HEK293 (cell line): ENCODE measurements at regions of chr11 and their contacts with region 1.

Region 1: GRCh38 chr11:125345421-125346178 is 150.5 kb downstream of the FEZ1 start:
- H3K4me3 ChIP-seq: no peak overlapping the region
- H3K27ac ChIP-seq: no peak overlapping the region
- H3K4me1 ChIP-seq: no peaks in the 10 kb centered on the region
- CTCF ChIP-seq: peak; percentile 27; the same call in 1 of the 2 replicates

Region 2: GRCh38 chr11:124778281-124778680 is 567.3 kb before region 1 on chr11:
- CTCF ChIA-PET with region 1: no interaction called
- POLR2A ChIA-PET with region 1: no interaction called
- H3K4me3 ChIP-seq: no peak overlapping the region
- H3K27ac ChIP-seq: no peak overlapping the region
- H3K4me1 ChIP-seq: no peaks in the 10 kb centered on the region
- CTCF ChIP-seq: no peak

Region 3: DNA sequence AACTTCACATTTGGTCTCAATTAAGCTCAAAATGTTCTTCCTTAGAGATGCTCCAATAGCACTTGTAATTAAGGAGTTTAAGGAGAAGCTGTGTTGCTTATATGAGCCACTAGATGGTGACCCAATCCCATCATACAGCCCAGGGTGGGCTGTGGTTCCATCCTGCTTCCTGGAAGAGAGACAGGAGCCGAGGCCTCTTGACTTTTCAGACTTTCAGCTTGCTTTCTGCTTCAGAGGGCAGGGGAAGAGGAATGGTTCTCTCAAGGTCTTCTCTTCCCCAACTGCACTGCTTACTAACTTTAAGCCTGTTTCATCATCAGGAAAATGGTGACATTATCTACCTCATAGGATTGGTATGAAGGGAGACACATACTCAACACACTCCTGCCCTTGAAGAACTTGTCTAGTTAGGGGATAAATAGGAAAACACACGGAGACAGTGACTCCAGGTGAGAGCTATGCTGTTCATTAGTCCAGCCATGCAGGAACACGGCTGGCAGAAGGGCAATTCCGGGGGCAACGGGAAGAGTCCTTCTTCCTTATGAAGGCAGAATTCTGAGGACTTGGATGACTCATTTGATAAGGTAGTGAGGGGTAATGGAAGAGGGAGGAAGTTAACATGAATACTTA is 254.2 kb before region 1 on chr11:
- CTCF ChIA-PET with region 1: interaction called, 60 read pairs
- POLR2A ChIA-PET with region 1: no interaction called
- H3K4me3 ChIP-seq: no peak overlapping the region
- H3K27ac ChIP-seq: no peak overlapping the region
- H3K4me1 ChIP-seq: no peaks in the 10 kb centered on the region
- CTCF ChIP-seq: peak; percentile 41; the same call in 1 of the 2 replicates

Region 4: DNA sequence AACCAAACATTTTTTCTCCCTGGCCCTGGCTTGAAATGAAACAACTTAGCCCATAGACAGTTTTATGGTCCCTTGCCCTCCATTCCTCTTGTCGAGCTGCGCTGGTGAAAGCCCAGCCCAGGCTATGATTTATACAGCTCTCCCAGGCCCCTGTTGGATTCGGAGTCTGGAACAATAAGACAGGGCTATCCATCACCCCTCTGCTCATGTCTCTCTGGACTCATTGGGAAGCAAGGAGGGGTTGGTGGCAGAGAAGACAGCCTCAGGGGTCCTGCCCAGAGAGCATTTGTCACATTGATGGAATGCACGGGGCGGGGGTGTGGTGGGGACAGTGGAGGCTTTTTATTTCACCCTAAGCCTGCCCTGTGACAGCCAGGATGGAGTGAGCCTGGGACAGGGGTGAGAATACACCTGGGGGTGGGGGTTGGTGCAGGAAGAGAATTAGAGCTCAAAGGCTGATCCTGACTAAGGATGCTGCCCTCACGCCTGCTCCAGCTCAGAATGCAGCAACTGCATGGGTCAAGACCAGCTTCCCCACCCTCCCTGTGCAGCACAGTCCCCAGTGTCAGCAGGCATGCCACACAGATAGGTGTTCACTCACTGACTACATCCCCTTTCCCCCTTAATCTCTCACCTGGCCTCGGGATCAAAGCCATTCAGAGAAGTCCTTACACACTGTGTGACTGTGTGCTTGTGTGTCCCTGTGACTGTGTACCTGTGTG is 191.1 kb before region 1 on chr11:
- CTCF ChIA-PET with region 1: interaction called, 14 read pairs
- POLR2A ChIA-PET with region 1: no interaction called
- H3K4me3 ChIP-seq: no peak overlapping the region
- H3K27ac ChIP-seq: no peak overlapping the region
- H3K4me1 ChIP-seq: no peaks in the 10 kb centered on the region
- CTCF ChIP-seq: no peak

Region 5: DNA sequence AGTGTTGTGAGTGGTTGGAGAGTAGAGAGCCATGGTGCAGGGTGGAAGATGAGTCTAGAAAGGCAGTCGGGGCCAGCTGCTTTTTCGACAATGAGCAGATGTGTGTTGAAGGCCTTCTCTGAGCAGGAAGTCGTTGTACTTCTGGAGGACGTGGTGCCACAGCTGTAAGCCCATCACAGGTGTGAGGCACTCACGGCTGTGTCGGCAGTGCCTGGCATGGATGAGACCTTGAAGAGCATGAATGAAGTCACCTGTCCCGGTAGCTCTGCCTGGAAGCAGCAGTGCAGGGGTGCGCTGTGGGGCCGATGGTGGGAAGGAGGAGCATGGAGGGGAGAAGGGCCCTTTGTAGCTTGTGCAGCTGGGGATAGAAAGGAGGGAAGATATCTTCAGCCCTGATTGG is 15.8 kb before region 1 on chr11:
- CTCF ChIA-PET with region 1: interaction called, 22 read pairs
- POLR2A ChIA-PET with region 1: interaction called, 3 read pairs
- H3K4me3 ChIP-seq: no peak overlapping the region
- H3K27ac ChIP-seq: no peak overlapping the region
- H3K4me1 ChIP-seq: no peaks in the 10 kb centered on the region
- CTCF ChIP-seq: no peak

Region 6: GRCh38 chr11:125358254-125358840 is 12.7 kb after region 1 on chr11:
- CTCF ChIA-PET with region 1: interaction called, 42 read pairs
- POLR2A ChIA-PET with region 1: no interaction called
- H3K4me3 ChIP-seq: no peak overlapping the region
- H3K27ac ChIP-seq: no peak overlapping the region
- H3K4me1 ChIP-seq: no peaks in the 10 kb centered on the region
- CTCF ChIP-seq: no peak

Region 7: GRCh38 chr11:125429166-125429707 is 83.6 kb after region 1 on chr11:
- CTCF ChIA-PET with region 1: interaction called, 25 read pairs
- POLR2A ChIA-PET with region 1: no interaction called
- H3K4me3 ChIP-seq: no peak overlapping the region
- H3K27ac ChIP-seq: no peak overlapping the region
- H3K4me1 ChIP-seq: no peaks in the 10 kb centered on the region
- CTCF ChIP-seq: peak; percentile 66